ENCODE measurements at regions of chr15 and their contacts with region 1.

Region 1: DNA sequence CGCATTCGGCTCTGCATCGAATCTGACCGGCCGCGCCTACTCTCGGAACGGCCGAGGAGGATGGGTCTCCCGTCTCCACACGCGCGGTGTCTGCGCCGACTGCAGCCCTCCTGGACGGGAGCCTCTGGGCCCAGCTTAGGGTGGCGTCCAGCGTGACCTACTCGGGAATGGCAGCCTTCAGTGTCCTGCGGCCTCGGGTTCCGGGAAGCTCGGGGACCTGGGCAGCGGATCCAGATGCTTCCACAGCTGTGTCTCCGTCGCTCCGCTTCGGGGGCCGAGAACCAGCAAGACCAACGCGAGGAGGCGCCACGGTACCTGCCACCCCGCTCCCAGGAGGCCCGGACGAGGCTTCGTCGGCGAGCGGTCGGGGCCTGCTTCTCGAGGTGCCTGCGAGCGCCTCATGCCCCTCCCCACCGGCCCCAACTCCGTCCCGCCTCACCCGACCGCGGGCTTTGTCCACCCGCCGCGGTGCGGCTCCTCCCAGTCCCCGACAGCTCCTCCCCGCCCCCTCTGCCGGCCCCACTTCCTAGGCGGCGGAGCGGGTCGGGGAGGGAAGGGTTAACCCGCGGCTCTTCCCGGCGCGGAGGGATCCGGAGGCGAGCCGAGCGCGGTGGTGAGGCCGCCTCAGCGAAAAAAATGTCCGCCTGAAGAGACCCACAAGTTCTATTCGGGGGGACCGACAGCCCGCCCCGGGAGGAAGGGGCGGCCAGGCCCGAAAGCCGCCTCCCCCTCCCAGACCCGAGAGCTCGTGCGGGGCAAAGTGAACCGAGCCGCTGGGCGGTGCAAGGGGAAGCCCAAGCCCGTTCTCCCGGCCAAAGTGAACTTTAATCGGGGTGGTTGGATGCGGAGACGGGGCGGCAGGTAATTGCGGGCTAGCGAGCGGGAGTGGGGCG is at the start of gene TCF12:
- DNase-seq: peak; percentile 95
- ATAC-seq: peak; percentile 85
- H3K4me3 Mint-ChIP-seq: peak within 1 kb of the TSS; percentile 82
- H3K27ac Mint-ChIP-seq: peak within 1 kb of the TSS; percentile 84
- H3K4me1 Mint-ChIP-seq: peaks cover 30% of the 10 kb centered on the region
- H3K27me3 Mint-ChIP-seq: no peaks in the 10 kb centered on the region
- total RNA-seq, gene TCF12: 61.1 to 74.9 TPM

Region 2: GRCh38 chr15:56886932-56887781 is 31.1 kb before region 1 on chr15:
- CTCF ChIA-PET with region 1: interaction called, 5 read pairs
- POLR2A ChIA-PET with region 1: interaction called, 6 read pairs
- intact Hi-C with region 1: loop called (anchors 1 kb)
- DNase-seq: peak; percentile 89
- ATAC-seq: peak; percentile 96
- H3K4me3 Mint-ChIP-seq: peak overlapping the region; percentile 71
- H3K27ac Mint-ChIP-seq: peak overlapping the region; percentile 86
- H3K4me1 Mint-ChIP-seq: peaks cover 20% of the 10 kb centered on the region
- H3K27me3 Mint-ChIP-seq: no peaks in the 10 kb centered on the region

Region 3: DNA sequence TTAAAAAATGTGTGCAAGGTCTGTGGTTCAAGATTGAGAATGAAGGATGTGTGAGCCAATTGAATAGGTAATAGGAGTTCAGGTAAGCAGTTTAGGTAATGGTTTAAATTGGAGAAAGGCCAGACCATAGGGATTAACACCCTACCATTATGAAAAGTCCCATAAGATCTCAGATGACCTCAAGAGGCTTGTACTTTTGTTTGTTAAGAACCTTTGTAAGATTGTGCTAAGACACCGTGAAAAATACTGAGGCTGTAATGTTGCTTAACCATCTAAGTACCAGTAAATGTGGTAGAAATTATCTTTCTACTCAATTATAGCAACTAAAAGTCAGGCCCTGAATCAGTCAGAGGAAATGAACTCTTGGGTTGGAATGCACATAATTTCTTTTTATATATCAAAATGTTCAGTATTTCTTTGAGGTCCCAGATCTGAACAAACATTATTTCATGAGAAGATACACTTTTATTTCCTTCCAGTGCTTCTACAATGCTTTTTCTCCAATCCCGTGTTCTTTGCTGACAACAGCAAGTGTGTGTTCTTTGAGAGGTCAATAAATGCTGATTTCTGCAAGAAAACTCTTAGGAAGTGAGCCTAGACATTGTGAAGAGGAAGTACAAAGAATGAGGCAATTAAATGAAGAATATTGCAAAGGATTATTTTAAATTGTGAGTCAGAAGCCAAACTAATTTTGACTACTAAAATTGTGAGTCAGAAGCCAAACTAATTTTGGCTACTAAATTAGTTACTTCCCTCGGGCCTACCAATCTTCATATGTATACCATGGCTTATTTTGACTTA is 66.6 kb after region 1 on chr15:
- CTCF ChIA-PET with region 1: no interaction called
- POLR2A ChIA-PET with region 1: no interaction called
- intact Hi-C with region 1: loop called in 1 of 2 experiments (anchors 2 kb)
- DNase-seq: no peak
- ATAC-seq: peak; percentile 31
- H3K4me3 Mint-ChIP-seq: no peak overlapping the region
- H3K27ac Mint-ChIP-seq: no peak overlapping the region
- H3K4me1 Mint-ChIP-seq: peaks cover 60% of the 10 kb centered on the region
- H3K27me3 Mint-ChIP-seq: no peaks in the 10 kb centered on the region

Region 4: GRCh38 chr15:57079931-57080620 is 161.8 kb after region 1 on chr15:
- CTCF ChIA-PET with region 1: no interaction called
- POLR2A ChIA-PET with region 1: no interaction called
- intact Hi-C with region 1: loop called in 1 of 2 experiments (anchors 1 kb)
- DNase-seq: no peak
- ATAC-seq: no peak
- H3K4me3 Mint-ChIP-seq: no peak overlapping the region
- H3K27ac Mint-ChIP-seq: no peak overlapping the region
- H3K4me1 Mint-ChIP-seq: peaks cover 20% of the 10 kb centered on the region
- H3K27me3 Mint-ChIP-seq: no peaks in the 10 kb centered on the region

Region 5: GRCh38 chr15:57306161-57306943 is 388.1 kb after region 1 on chr15:
- CTCF ChIA-PET with region 1: interaction called, 4 read pairs
- POLR2A ChIA-PET with region 1: no interaction called
- intact Hi-C with region 1: loop called (anchors 1 to 10 kb)
- DNase-seq: peak; percentile 92
- ATAC-seq: peak; percentile 92
- H3K4me3 Mint-ChIP-seq: peak overlapping the region; percentile 49
- H3K27ac Mint-ChIP-seq: no peak overlapping the region
- H3K4me1 Mint-ChIP-seq: peaks cover 6% of the 10 kb centered on the region
- H3K27me3 Mint-ChIP-seq: peaks cover 7% of the 10 kb centered on the region